Right ventricle myocardium inferior (tissue), 1 donor: ENCODE measurements at regions of chr2 and their contacts with region 1.

Region 1: GRCh38 chr2:55232084-55232862 is at the starts of genes CLHC1 and RPS27A:
- DNase-seq: peak; percentile 92
- ATAC-seq: peak; percentile 97
- total RNA-seq, gene CLHC1: 6.7 TPM
- total RNA-seq, gene RPS27A: 472 TPM

Region 2: GRCh38 chr2:55033066-55033742 is 199.1 kb before region 1 on chr2:
- intact Hi-C with region 1: no loop called
- DNase-seq: no peak
- ATAC-seq: peak; percentile 16

Region 3: GRCh38 chr2:55268907-55269644 is 36.8 kb after region 1 on chr2 and contains the start of gene MTIF2:
- intact Hi-C with region 1: loop called (anchors 5 kb)
- DNase-seq: peak; percentile 97
- ATAC-seq: peak; percentile 100
- total RNA-seq, gene MTIF2: 49.6 TPM

Region 4: DNA sequence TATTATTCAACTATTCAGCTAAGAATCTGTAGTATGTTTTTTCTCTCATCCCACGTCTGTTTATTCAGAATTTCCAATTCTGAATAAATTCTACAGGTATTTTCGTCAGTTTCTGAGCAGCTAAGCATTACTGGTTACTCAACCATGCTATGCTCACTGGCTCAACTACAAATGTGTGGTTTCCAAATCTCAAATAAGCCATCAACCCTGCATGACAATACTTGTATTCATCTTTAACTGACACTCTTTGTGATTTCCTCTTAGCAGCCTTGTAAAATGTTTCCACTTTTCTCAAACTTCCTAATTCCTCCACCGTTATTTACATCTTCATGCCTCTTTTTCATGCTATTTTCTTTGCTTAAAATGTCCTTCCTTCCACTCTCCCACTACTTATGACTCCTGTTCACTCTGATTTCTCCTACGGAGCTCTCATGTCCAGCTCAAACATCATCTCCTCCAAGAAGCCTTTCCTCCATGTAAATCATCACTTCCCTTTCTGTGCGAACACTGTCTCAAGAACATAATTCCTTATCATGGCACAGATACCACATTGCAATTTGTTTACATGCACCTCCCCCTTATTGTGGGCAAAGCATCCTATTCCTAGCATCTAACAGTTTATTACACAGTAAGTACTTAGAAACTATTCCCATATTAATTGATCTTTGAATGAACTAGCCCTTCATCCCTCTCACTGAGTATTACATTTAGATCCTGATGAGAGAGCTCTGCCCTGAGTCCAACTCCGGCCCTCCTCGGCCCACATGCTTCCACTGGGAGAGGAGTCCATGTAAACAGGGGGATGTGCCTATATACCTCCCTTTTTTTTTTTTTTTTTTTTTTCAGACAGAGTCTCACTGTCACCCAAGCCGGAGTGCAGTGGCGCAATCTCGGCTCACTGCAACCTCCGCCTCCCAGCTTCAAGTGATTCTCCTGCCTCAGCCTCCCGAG is 176.9 kb after region 1 on chr2:
- intact Hi-C with region 1: no loop called
- DNase-seq: no peak
- ATAC-seq: no peak